Heart right ventricle (tissue), 16 donors: ENCODE measurements at regions of chr22 and their contacts with region 1.

Region 1: GRCh38 chr22:32796865-32797573 is 4.5 kb upstream of the TIMP3 start:
- DNase-seq: peak; percentile 74 to 80
- ATAC-seq: peak; percentile 57 to 79 (median 70)
- H3K4me3 ChIP-seq: no peak overlapping the region
- H3K27ac ChIP-seq: peak overlapping the region in 6 of 10 donors; percentile 13 to 54 (median 37)
- H3K4me1 ChIP-seq: peaks cover 2 to 43% (median 22%) of the 10 kb centered on the region in 9 donors
- H3K27me3 ChIP-seq: peaks cover 0 to 18% (median 0%) of the 10 kb centered on the region in 7 donors
- CTCF ChIP-seq: peak; percentile 82 to 95 (median 92)

Region 2: GRCh38 chr22:32660292-32660691 is 136.7 kb before region 1 on chr22:
- intact Hi-C with region 1: loop called (anchors 1 to 5 kb)
- DNase-seq: peak; percentile 70 to 71
- ATAC-seq: peak; percentile 67 to 86 (median 72)
- H3K4me3 ChIP-seq: no peak overlapping the region
- H3K27ac ChIP-seq: peak overlapping the region in 2 of 10 donors; percentile 14 to 59
- H3K4me1 ChIP-seq: peaks cover 0 to 21% (median 7%) of the 10 kb centered on the region in 9 donors
- H3K27me3 ChIP-seq: no peaks in the 10 kb centered on the region
- CTCF ChIP-seq: peak; percentile 68 to 87 (median 80)

Region 3: GRCh38 chr22:32723643-32724042 is 73.4 kb before region 1 on chr22:
- intact Hi-C with region 1: no loop called
- DNase-seq: peak; percentile 66 to 70
- ATAC-seq: peak; percentile 58 to 86 (median 82)
- H3K4me3 ChIP-seq: no peak overlapping the region
- H3K27ac ChIP-seq: peak overlapping the region in 8 of 10 donors; percentile 42 to 78 (median 52)
- H3K4me1 ChIP-seq: peaks cover 9 to 38% (median 23%) of the 10 kb centered on the region in 9 donors
- H3K27me3 ChIP-seq: peaks cover 0 to 4% (median 0%) of the 10 kb centered on the region in 7 donors
- CTCF ChIP-seq: no peak

Region 4: DNA sequence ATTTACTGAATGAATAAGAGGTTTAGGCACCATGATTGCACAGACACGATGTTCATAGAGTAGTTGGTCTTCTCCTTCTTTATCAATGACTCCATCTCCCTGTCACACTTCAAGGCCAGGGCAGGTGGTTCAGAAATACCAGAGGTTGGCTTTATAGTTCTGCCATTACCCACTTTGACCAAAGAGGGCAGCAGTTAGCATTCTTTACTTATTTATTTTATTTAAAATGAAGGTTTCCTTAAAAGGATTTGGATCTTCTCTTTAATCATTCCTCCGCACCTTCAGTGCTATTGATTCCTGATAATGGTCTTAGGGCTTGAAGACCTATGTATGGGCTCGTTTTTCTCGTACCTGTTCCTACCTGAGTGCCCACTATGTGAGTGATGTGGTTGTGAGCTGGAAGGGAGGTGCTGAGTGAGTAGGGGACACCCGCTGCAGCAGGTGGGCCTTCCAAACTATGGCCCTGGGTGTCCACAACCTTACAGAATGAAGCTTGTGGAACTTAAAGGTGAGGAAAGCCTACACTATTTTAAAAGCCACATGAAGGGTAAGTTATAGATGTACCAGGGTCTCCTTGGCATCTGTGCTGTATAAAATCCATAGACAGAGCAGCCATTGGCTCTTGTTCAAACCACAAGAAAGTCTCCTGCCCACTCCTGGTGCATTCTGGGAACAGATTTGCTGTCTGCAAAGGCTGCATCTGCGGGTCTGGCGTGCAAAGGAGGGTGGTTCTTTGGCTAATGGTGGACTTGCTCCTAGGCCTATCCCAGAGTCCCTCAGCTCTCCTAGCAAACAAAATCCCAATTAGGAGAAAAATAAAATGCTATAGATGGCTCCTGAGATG is 39.5 kb after region 1 on chr22:
- intact Hi-C with region 1: loop called in 1 of 10 experiments (anchors 5 kb)
- DNase-seq: no peak
- ATAC-seq: no peak
- H3K4me3 ChIP-seq: no peak overlapping the region
- H3K27ac ChIP-seq: peak overlapping the region in 5 of 10 donors; percentile 1 to 86 (median 42)
- H3K4me1 ChIP-seq: peaks cover 58 to 100% (median 96%) of the 10 kb centered on the region in 9 donors
- H3K27me3 ChIP-seq: no peaks in the 10 kb centered on the region
- CTCF ChIP-seq: peak; percentile 30 to 64 (median 48)

Region 5: GRCh38 chr22:32862936-32863661 is 66.1 kb after region 1 on chr22:
- intact Hi-C with region 1: loop called in 1 of 10 experiments (anchors 10 kb)
- DNase-seq: no peak
- ATAC-seq: peak in 5 of 8 donors; percentile 17 to 56 (median 26)
- H3K4me3 ChIP-seq: no peak overlapping the region
- H3K27ac ChIP-seq: peak overlapping the region in 2 of 10 donors; percentile 2 to 48
- H3K4me1 ChIP-seq: peaks cover 0 to 13% (median 0%) of the 10 kb centered on the region in 9 donors
- H3K27me3 ChIP-seq: no peaks in the 10 kb centered on the region
- CTCF ChIP-seq: no peak